Common myeloid progenitor, CD34-positive (primary cell): ENCODE measurements at regions of chr7 and their contacts with region 1.

Region 1: GRCh38 chr7:26090927-26091519 is 61.0 kb upstream of the NFE2L3 start:
- DNase-seq: peak; percentile 75 to 78 (median 77)
- H3K4me3 ChIP-seq: peak overlapping the region in 5 of 7 experiments; percentile 11 to 69 (median 33)
- H3K27ac ChIP-seq: peak overlapping the region in 1 of 2 experiments; percentile 44
- H3K4me1 ChIP-seq: peaks cover 0 to 16% (median 6%) of the 10 kb centered on the region in 4 experiments
- H3K27me3 ChIP-seq: no peaks in the 10 kb centered on the region

Region 2: GRCh38 chr7:26187380-26188205 is 96.6 kb after region 1 on chr7:
- CTCF ChIA-PET with region 1: interaction called, 150 read pairs
- POLR2A ChIA-PET with region 1: interaction called, 16 read pairs
- DNase-seq: peak in 2 of 3 donors; percentile 53 to 60
- H3K4me3 ChIP-seq: no peak overlapping the region
- H3K27ac ChIP-seq: peak overlapping the region in 1 of 2 experiments; percentile 14
- H3K4me1 ChIP-seq: peaks cover 2 to 8% (median 2%) of the 10 kb centered on the region in 4 experiments
- H3K27me3 ChIP-seq: no peaks in the 10 kb centered on the region

Region 3: DNA sequence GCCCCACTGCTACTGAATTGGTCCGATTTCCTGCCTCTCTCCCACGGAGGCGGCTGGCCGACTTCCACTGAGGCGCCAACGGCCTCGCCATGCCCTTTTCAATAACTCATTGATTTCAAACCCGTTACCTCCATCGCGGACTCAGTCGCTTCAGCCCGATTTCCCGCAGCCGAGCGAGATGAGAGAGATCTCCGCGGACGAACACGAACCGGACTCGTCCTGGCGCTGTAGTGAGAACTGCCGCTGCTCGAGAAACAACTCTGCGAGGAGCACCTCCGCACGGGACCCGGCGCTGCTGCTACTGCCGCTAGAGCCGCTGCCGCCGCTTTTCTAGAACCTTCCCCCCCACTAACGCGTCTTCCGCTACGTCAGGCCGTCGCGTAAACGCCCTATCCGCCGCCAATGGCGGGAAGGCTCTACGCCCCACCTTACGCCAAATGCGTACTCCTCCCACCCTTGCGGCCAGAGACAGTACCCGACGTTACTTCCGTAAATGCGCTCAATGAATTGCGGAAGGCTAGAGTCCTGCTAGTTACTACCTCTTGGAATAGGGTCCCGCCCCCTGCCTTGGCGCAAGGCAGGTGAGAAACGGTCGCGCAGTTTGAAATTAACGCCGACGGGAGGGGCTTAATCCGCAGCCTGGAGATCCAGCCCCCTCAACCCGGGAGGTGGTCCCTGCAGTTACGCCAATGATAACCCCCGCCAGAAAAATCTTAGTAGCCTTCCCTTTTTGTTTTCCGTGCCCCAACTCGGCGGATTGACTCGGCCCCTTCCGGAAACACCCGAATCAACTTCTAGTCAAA is 109.6 kb after region 1 on chr7 and contains the start of gene HNRNPA2B1:
- CTCF ChIA-PET with region 1: interaction called, 150 read pairs
- POLR2A ChIA-PET with region 1: interaction called, 7 read pairs
- DNase-seq: peak; percentile 99 to 100 (median 100)
- H3K4me3 ChIP-seq: peak within 1 kb of the TSS; percentile 95 to 100 (median 99)
- H3K27ac ChIP-seq: peak within 1 kb of the TSS; percentile 98 to 99
- H3K4me1 ChIP-seq: peaks cover 36 to 55% (median 50%) of the 10 kb centered on the region in 4 experiments
- H3K27me3 ChIP-seq: no peaks in the 10 kb centered on the region